IMR-90 (cell line): ENCODE measurements at regions of chr13 and their contacts with region 1.

Region 1: GRCh38 chr13:30114571-30115256 is 192.6 kb downstream of the KATNAL1 start:
- DNase-seq: peak; percentile 82
- ATAC-seq: peak; percentile 79
- H3K4me3 ChIP-seq: peak overlapping the region; percentile 61
- H3K27ac ChIP-seq: no peak overlapping the region
- H3K4me1 ChIP-seq: peaks cover 3% of the 10 kb centered on the region; the same call in 1 of the 2 replicates
- H3K27me3 ChIP-seq: no peaks in the 10 kb centered on the region; the same call in 1 of the 2 replicates
- CTCF ChIP-seq: peak; percentile 88
- POLR2A ChIP-seq: no peak
- RAD21 ChIP-seq: peak; percentile 89

Region 2: DNA sequence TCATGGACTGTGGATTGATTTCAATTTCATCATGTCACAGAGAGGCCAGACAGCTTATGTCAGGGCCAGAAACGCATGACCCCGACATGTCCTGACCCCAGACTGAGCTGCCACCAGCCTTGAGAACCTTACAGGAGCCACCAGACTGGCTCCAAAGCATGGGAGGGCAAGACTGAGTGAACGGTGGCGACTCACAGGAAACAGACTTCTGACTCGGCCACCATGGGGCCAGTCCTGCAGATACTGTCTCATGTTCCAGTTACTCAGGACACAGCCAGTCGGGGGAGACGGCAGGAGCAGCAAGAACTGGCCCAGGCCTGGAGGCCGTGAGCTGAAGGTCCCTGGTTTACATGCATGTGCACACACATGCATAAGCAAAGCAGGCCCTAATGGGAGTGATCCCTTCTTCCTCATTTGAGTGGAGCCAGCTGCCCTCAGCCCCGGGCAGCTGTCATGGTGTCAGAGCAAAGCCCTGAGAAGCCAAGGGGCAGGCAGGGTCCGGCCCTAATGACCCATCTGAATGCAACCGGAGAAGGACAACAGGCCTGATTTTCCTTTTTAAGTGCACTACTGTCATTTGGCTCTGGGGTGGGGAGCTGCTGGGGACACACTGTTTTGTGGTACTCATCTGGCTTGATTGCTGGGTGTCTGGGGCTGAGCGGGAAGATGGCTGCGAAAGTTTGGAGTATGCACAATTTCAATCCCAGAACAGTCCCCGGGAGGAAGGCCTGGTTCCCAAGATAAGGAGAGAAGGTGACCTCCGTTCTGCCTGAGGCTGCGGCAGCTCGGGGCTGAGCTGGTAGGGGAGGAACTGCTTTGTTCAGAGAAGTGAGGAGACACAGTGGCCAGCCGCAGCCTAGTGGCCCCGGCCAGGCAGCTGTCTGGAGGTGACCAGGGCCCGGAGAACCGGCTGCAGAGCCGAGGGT is 601.1 kb before region 1 on chr13:
- CTCF ChIA-PET with region 1: interaction called, 3 read pairs
- POLR2A ChIA-PET with region 1: no interaction called
- dilution Hi-C with region 1: no loop called
- in situ Hi-C with region 1: loop called (anchors 5 kb)
- intact Hi-C with region 1: loop called (anchors 1 kb)
- DNase-seq: peak; percentile 63
- ATAC-seq: peak; percentile 42; the same call in 1 of the 2 replicates
- H3K4me3 ChIP-seq: no peak overlapping the region
- H3K27ac ChIP-seq: no peak overlapping the region
- H3K4me1 ChIP-seq: peaks cover 4% of the 10 kb centered on the region
- H3K27me3 ChIP-seq: no peaks in the 10 kb centered on the region
- CTCF ChIP-seq: no peak
- POLR2A ChIP-seq: no peak
- RAD21 ChIP-seq: no peak; the same call in 1 of the 2 replicates

Region 3: GRCh38 chr13:29771247-29771646 is 343.5 kb before region 1 on chr13:
- CTCF ChIA-PET with region 1: interaction called, 29 read pairs
- POLR2A ChIA-PET with region 1: no interaction called
- dilution Hi-C with region 1: no loop called
- in situ Hi-C with region 1: loop called (anchors 5 kb)
- intact Hi-C with region 1: loop called (anchors 1 kb)
- DNase-seq: peak; percentile 49
- ATAC-seq: no peak; the same call in 1 of the 2 replicates
- H3K4me3 ChIP-seq: no peak overlapping the region
- H3K27ac ChIP-seq: no peak overlapping the region
- H3K4me1 ChIP-seq: 0 out of 2 replicates have a peak, but pooled peaks cover 2% of the 10 kb centered on the region
- H3K27me3 ChIP-seq: no peaks in the 10 kb centered on the region
- CTCF ChIP-seq: peak; percentile 59
- POLR2A ChIP-seq: no peak
- RAD21 ChIP-seq: peak; percentile 64

Region 4: DNA sequence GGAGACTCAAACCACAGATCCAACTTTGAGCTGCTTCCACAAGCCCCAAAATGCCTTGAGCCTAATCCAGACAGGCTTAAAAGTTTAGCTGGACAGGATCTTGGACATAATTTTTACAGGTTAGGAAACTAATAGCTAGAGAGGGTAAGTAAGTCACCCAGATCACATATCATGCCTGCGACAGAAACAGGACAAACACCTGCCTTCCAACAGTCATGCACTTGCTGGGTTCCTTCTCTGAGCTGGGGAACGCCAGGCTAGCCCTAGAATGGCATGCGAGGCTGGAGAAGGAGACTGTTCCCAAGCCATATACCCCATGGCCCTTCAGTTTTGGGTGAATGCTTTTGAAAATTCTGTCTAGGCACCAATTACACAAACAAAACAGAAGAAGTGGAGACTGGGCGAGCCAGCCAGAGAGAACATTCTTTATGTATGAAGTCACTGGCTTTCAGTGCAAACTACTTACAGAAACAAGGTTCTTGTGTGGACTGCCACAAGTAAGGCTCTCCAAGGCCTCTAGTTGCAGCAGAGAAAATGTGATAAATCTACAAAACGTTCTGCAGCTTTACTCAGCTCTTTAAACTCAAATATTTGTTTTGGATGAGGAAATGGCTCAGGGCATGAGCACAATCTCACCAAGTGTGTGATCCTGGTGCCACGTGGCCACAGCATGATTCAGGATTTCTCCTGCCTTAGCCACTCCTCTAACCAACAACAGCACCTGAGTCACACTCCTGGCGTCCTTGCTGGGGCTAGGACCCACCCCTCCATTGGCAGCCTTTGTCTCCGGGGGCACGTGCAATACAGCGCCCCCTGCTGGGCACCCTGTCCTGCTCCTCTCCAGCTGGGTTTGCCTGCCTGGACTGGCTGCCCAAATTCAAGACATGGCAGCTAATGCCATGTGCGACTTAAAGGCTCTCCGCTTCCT is 190.9 kb before region 1 on chr13:
- CTCF ChIA-PET with region 1: interaction called, 7 read pairs
- POLR2A ChIA-PET with region 1: no interaction called
- dilution Hi-C with region 1: no loop called
- in situ Hi-C with region 1: loop called (anchors 10 kb)
- intact Hi-C with region 1: loop called (anchors 1 kb)
- DNase-seq: peak; percentile 99
- ATAC-seq: peak; percentile 83
- H3K4me3 ChIP-seq: no peak overlapping the region
- H3K27ac ChIP-seq: peak overlapping the region; percentile 77
- H3K4me1 ChIP-seq: peaks cover 27% of the 10 kb centered on the region
- H3K27me3 ChIP-seq: no peaks in the 10 kb centered on the region
- CTCF ChIP-seq: peak; percentile 80
- POLR2A ChIP-seq: no peak
- RAD21 ChIP-seq: peak; percentile 70

Region 5: DNA sequence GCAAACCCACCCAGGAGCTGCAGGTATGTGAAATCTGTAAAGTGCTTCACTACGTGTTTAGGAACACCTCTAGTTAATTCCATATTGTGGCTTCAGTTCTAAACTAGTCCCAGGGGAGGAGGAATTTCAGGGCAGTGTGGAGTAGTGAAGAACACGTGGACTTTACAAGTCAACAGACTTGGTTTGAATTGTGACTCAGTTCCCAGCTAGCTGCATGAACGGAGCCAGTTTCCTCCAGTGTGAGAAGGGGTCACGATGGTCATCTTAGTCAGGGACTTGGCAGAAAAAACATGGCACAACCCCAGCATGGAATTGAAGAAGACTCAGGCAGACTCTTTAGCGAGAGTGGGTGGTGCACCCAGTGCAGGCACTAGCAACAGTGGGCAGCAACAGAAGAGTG is 88.6 kb before region 1 on chr13:
- CTCF ChIA-PET with region 1: interaction called, 5 read pairs
- POLR2A ChIA-PET with region 1: no interaction called
- dilution Hi-C with region 1: no loop called
- in situ Hi-C with region 1: no loop called
- intact Hi-C with region 1: loop called (anchors 1 kb)
- DNase-seq: peak; percentile 96
- ATAC-seq: peak; percentile 90
- H3K4me3 ChIP-seq: no peak overlapping the region
- H3K27ac ChIP-seq: no peak overlapping the region
- H3K4me1 ChIP-seq: peaks cover 17% of the 10 kb centered on the region
- H3K27me3 ChIP-seq: no peaks in the 10 kb centered on the region
- CTCF ChIP-seq: no peak
- POLR2A ChIP-seq: no peak
- RAD21 ChIP-seq: no peak

Region 6: GRCh38 chr13:30142486-30143211 is 27.9 kb after region 1 on chr13:
- CTCF ChIA-PET with region 1: no interaction called
- POLR2A ChIA-PET with region 1: no interaction called
- dilution Hi-C with region 1: no loop called
- in situ Hi-C with region 1: no loop called
- intact Hi-C with region 1: no loop called
- DNase-seq: peak; percentile 99
- ATAC-seq: peak; percentile 89
- H3K4me3 ChIP-seq: no peak overlapping the region
- H3K27ac ChIP-seq: peak overlapping the region; percentile 95
- H3K4me1 ChIP-seq: peaks cover 17% of the 10 kb centered on the region
- H3K27me3 ChIP-seq: no peaks in the 10 kb centered on the region
- CTCF ChIP-seq: no peak
- POLR2A ChIP-seq: no peak
- RAD21 ChIP-seq: no peak